Dorsolateral prefrontal cortex (tissue), 120 donors: ENCODE measurements at regions of chr19 and their contacts with region 1.

Region 1: DNA sequence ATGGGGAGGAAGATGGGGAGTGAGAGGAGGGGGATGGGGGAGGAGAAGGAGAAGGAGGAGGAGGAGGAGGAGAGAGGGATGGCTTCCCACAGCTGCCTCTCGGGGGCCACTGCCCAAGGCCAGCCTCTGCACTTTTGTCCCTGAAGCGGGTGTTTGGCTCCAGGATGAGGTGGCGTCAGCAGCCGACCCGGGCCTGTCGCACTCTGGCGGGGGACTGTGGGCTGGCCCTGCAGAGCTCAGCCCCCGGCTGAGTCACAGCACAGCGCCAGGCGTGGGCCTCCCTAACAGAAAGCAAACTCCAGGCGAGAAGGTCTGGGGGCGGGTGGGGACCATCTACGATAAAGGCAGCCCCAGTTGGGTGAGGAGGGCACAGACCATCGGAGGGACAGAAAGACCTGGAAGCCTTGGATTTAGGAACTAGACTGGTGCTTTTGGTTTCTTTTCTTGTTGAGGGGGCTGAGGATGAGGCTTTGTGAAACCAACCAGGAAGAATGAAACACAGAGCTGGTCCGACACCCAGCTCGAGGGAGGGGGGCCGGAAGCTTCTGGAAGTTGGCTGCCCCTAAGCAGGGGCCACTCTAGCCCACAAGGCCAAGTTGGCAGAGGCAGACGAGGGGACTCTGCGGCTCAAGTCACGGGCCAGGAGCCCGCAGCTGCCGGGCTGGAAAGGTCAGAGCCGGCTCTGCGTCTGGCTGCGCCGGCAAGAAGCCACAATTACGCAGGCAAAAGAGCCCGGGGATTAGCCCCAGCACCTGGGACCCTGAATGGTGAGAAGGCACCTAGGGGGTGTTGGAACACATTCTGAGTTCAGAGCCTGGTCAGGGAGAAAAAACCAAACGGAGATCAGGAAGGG is 18.2 kb downstream of the LSM4 start:
- DNase-seq: peak; percentile 42 to 93 (median 79)
- H3K4me3 ChIP-seq: peak overlapping the region; percentile 7 to 65 (median 48)
- H3K27ac ChIP-seq: peak overlapping the region; percentile 68 to 100 (median 98)
- H3K27me3 ChIP-seq: no peaks in the 10 kb centered on the region
- CTCF ChIP-seq: peak in 9 of 56 donors; percentile 3 to 32 (median 11)

Region 2: GRCh38 chr19:18251587-18252369 is 52.9 kb before region 1 on chr19:
- intact Hi-C with region 1: no loop called
- DNase-seq: peak in 9 of 10 donors; percentile 64 to 85 (median 75)
- H3K4me3 ChIP-seq: peak overlapping the region in 2 of 59 donors; percentile 14 to 17
- H3K27ac ChIP-seq: no peak overlapping the region
- H3K27me3 ChIP-seq: no peaks in the 10 kb centered on the region
- CTCF ChIP-seq: peak; percentile 77 to 99 (median 94)

Region 3: DNA sequence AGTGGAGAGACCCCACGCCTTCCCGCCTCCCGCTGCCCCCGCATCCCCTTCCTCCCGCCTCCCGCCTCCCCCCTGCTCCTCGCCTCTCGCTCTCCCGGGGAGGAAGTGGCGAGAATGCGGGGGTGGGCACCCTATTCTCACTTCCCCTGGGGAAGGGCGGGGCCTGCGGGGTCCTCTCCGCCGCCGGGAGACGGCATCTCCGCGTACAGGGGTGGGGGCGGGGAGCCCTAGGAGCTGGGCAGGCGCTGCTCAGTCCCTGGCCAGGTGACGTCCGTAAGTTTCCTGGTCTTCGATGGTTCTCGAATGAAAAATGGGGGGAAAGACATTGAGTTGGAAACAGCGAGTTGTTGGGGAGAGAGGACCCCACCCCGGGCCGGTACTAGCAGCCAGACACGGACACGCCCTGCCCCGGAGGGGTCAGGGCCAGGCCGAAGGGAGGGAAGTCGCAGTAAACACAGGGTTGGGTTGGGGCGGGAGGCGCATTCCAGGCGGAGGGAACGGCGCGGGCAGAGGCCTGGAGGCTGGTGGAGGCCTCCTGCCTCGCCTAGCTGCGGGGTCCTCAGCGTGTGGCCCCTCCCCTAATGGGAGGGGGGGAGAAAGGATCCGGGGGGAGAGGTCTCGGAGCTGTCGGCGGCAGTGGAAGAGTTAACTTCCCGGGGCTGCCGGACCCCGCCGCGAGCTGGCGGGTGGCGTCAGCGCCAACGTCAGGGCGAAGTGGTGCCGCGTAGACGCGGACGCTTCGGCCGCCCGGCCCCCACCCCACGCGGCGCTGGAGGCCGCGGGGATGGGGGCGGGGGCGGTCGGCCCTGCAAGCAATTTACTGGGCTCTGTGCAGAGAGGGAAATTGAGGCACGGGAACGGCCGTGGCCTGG is 12.9 kb before region 1 on chr19:
- intact Hi-C with region 1: loop called in 1 of 2 experiments (anchors 1 kb)
- DNase-seq: peak; percentile 57 to 91 (median 79)
- H3K4me3 ChIP-seq: peak overlapping the region; percentile 52 to 93 (median 79)
- H3K27ac ChIP-seq: peak overlapping the region; percentile 53 to 100 (median 98)
- H3K27me3 ChIP-seq: no peaks in the 10 kb centered on the region
- CTCF ChIP-seq: peak in 3 of 56 donors; percentile 0 to 5 (median 2)